ENCODE measurements at regions of chr4 and their contacts with region 1.

Region 1: GRCh38 chr4:9691238-9692065 is 90.0 kb upstream of the DRD5 start:
- DNase-seq: peak; percentile 89 to 93 (median 91)
- H3K4me3 ChIP-seq: peak overlapping the region; percentile 44 to 67
- H3K4me3 Mint-ChIP-seq: peak overlapping the region; percentile 79 to 91 (median 89)
- H3K27ac ChIP-seq: peak overlapping the region; percentile 67
- H3K27ac Mint-ChIP-seq: peak overlapping the region; percentile 53 to 95 (median 88)
- H3K4me1 ChIP-seq: peaks cover 6% of the 10 kb centered on the region
- H3K4me1 Mint-ChIP-seq: peaks cover 14 to 27% (median 19%) of the 10 kb centered on the region in 4 donors
- H3K27me3 ChIP-seq: no peaks in the 10 kb centered on the region
- H3K27me3 Mint-ChIP-seq: peaks cover 0 to 2% of the 10 kb centered on the region in 2 donors

Region 2: DNA sequence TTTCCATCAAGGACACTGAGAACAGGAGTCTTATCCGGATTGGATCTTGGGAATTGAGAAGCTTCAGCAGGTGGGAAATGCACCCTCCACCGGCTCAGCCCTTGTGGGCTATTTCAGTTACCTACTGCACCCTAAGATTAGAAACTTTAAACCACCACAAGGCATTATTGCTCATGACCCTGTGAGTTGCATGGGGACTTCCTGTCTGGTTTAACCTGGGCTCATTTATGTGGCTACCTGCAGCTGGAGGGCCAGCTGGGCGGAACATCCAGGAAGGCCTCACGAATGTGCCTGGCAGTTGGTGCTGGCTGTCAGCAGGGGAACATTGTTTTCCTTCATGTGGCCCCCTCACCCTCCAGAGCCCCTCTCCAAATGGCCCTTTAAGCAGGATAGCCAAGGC is 83.2 kb before region 1 on chr4:
- CTCF ChIA-PET with region 1: no interaction called
- POLR2A ChIA-PET with region 1: interaction called, 13 read pairs
- intact Hi-C with region 1: no loop called
- DNase-seq: no peak
- H3K4me3 ChIP-seq: no peak overlapping the region
- H3K4me3 Mint-ChIP-seq: peak overlapping the region in 1 of 8 donors; percentile 23
- H3K27ac ChIP-seq: no peak overlapping the region
- H3K27ac Mint-ChIP-seq: no peak overlapping the region
- H3K4me1 ChIP-seq: peaks cover 18% of the 10 kb centered on the region
- H3K4me1 Mint-ChIP-seq: peaks cover 17 to 34% (median 27%) of the 10 kb centered on the region in 4 donors
- H3K27me3 ChIP-seq: no peaks in the 10 kb centered on the region
- H3K27me3 Mint-ChIP-seq: no peaks in the 10 kb centered on the region

Region 3: GRCh38 chr4:9704551-9705332 is 13.3 kb after region 1 on chr4:
- CTCF ChIA-PET with region 1: interaction called, 18 read pairs
- POLR2A ChIA-PET with region 1: no interaction called
- intact Hi-C with region 1: no loop called
- DNase-seq: no peak
- H3K4me3 ChIP-seq: no peak overlapping the region
- H3K4me3 Mint-ChIP-seq: no peak overlapping the region
- H3K27ac ChIP-seq: no peak overlapping the region
- H3K27ac Mint-ChIP-seq: no peak overlapping the region
- H3K4me1 ChIP-seq: no peaks in the 10 kb centered on the region
- H3K4me1 Mint-ChIP-seq: peaks cover 7 to 14% (median 8%) of the 10 kb centered on the region in 4 donors
- H3K27me3 ChIP-seq: no peaks in the 10 kb centered on the region
- H3K27me3 Mint-ChIP-seq: peaks cover 0 to 3% of the 10 kb centered on the region in 2 donors

Region 4: GRCh38 chr4:9867751-9868425 is 176.4 kb after region 1 on chr4:
- CTCF ChIA-PET with region 1: no interaction called
- POLR2A ChIA-PET with region 1: no interaction called
- intact Hi-C with region 1: no loop called
- DNase-seq: no peak
- H3K4me3 ChIP-seq: no peak overlapping the region
- H3K4me3 Mint-ChIP-seq: no peak overlapping the region
- H3K27ac ChIP-seq: no peak overlapping the region
- H3K27ac Mint-ChIP-seq: peak overlapping the region in 1 of 7 donors; percentile 23
- H3K4me1 ChIP-seq: no peaks in the 10 kb centered on the region
- H3K4me1 Mint-ChIP-seq: peaks cover 0 to 3% (median 0%) of the 10 kb centered on the region in 4 donors
- H3K27me3 ChIP-seq: no peaks in the 10 kb centered on the region
- H3K27me3 Mint-ChIP-seq: peaks cover 3 to 5% of the 10 kb centered on the region in 2 donors